ENCODE measurements at regions of chr12 and their contacts with region 1.

Region 1: DNA sequence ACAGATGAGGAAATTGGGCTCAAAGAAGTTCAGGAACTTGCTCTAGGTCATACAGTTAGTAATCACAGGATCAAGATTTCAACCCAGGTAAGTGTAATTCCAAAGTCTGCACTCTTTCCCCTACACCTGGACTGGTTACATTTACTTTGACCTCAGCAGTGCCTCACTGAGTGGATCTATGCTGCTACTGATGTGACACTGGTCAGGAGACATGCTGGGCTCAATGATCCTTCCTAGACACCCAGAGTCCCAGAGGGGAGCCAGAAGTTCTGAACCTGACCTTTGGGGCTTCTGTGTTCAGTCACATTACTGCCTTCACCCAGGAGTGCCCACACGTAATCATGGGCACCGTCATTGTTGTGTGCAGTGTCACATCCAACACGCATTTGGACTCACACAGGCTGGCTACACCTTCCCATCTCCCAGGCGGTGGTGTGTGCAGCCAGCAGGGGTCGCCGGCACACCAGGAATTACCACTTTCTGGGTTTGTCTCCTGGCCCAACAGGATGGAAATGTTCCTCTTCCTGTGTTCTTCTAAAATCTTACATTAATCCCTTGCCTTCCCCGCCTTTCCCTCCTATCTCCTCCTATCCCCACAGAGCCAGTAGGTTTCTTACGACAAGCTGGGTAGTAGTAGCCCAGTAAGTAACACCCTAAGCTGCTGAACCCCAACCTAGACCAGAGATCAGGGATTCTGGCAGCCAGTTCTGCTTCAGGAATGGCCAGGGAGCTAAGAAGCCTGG is 25.6 kb downstream of the CALCOCO1 start:
- DNase-seq: no peak
- H3K4me3 ChIP-seq: no peak overlapping the region
- H3K27me3 ChIP-seq: peaks cover 28% of the 10 kb centered on the region
- CTCF ChIP-seq: peak; percentile 96

Region 2: DNA sequence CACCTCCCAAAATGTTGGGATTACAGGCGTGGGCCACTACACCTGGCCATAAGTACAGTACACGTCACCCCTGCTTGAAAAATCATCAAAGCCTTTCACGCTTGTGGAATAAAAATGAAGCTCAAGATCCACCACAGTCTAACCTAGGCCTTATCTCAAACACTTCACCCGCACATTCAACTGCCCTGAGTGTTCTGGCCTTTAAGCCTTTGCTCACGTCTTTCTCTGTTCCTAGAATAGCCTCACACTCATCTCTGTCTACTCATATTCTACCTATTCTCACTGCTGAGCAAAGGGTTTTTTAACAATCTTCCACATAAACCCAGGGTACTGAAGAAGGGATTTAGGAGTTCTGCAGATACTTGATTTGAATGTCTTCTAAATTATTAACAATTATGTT is 15.6 kb after region 1 on chr12:
- CTCF ChIA-PET with region 1: interaction called, 12 read pairs
- POLR2A ChIA-PET with region 1: no interaction called
- DNase-seq: no peak
- H3K4me3 ChIP-seq: no peak overlapping the region
- H3K27me3 ChIP-seq: no peaks in the 10 kb centered on the region
- CTCF ChIP-seq: no peak

Region 3: GRCh38 chr12:53727310-53728041 is 25.8 kb after region 1 on chr12 and contains the start of gene CALCOCO1:
- CTCF ChIA-PET with region 1: interaction called, 22 read pairs
- POLR2A ChIA-PET with region 1: no interaction called
- DNase-seq: peak; percentile 96
- H3K4me3 ChIP-seq: peak within 1 kb of the TSS; percentile 86
- H3K27me3 ChIP-seq: no peaks in the 10 kb centered on the region; the same call in 1 of the 2 replicates
- CTCF ChIP-seq: no peak
- polyA plus RNA-seq, gene CALCOCO1: 170 and 206 TPM in 2 replicates

Region 4: DNA sequence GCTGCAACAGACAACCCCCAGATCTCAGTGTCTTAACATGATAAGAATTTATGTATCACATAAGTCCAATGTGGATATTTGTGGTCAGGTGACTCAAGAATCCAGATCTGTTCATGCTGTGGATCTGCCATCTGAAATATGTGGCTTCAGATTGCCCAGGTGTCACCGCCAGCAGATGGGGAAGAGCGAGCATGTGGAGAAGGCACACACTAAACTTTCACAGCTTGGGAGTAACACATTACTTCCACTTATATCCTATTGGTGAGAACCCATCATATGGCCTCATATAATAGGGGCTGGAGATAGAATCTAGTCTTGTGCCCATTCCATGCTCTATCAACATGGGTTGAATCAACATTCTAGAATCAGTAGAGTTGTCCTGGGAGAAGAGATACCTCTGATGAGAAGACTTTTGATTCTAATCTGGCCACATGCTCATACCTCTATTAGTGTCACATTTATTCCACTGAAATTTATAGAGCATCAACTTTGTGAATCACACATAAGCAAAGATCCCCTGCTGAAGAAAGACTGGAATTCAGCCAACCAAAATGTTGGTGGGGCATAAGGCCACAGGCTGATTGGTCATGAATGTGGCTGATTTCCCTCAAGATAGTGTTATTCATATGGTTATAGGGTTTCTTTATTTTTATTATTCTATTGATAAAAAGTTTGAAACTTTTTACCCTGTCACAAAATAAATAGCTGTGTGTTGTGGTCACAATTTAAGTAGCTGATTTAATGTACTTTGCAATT is 31.5 kb after region 1 on chr12:
- CTCF ChIA-PET with region 1: interaction called, 22 read pairs
- POLR2A ChIA-PET with region 1: no interaction called
- DNase-seq: peak; percentile 26
- H3K4me3 ChIP-seq: no peak overlapping the region
- H3K27me3 ChIP-seq: peaks cover 29% of the 10 kb centered on the region
- CTCF ChIP-seq: no peak

Region 5: DNA sequence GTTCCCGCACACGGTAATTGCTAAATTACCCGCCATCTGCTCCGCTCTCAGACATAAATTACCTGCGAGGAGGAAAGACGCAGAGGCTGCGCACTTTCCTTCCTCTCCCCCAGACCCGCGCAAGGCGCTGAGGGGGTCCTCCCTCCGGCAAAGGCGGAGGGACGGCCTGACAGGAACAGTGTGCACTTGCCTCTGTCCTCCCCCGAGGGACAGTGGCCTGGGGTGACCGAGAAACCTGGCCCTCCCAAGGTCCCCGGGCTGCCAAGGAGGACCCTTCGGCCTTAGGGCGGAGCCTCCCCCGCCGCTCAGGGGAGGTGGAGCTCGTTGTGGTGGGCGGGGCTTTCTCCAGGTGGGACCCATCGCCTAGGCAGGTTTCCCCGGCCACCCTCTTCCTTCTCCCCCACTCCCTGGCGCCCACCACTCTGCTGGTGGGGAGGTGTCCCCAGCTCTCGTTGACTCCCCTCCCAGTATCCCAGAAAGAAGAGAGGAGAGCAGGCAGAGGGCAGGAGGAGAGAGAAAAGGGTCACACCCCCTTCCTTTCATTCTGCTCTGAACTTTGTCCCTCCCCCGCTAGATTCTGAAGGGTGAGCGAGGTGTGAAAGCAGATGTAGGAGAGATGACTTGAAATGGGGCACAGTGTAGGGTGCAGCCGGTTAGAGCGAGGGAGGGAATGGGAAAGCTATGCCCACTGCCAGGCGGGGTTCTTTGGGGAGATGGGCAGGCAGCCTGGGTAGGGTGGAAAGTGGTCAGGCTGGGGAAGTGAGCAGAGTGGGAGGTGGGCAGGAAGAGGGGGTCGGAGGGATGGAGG is 36.9 kb after region 1 on chr12:
- CTCF ChIA-PET with region 1: interaction called, 324 read pairs
- POLR2A ChIA-PET with region 1: no interaction called
- DNase-seq: no peak
- H3K4me3 ChIP-seq: no peak overlapping the region
- H3K27me3 ChIP-seq: peaks cover 59% of the 10 kb centered on the region
- CTCF ChIP-seq: no peak

Measured in BJ (cell line).